CD8-positive, alpha-beta T cell (primary cell): ENCODE measurements at regions of chr3 and their contacts with region 1.

Region 1: GRCh38 chr3:112498914-112499711 is at the start of gene BTLA:
- DNase-seq: peak in 5 of 9 experiments; percentile 11 to 67 (median 24)
- ATAC-seq: peak; percentile 62
- H3K4me3 ChIP-seq: peak within 1 kb of the TSS; percentile 31 to 64
- H3K4me3 Mint-ChIP-seq: peak within 1 kb of the TSS; percentile 88
- H3K27ac ChIP-seq: peak within 1 kb of the TSS; percentile 48 to 65
- H3K27ac Mint-ChIP-seq: peak within 1 kb of the TSS; percentile 90
- H3K4me1 ChIP-seq: peaks cover 35% of the 10 kb centered on the region
- H3K4me1 Mint-ChIP-seq: peaks cover 59% of the 10 kb centered on the region
- H3K27me3 ChIP-seq: no peaks in the 10 kb centered on the region
- H3K27me3 Mint-ChIP-seq: no peaks in the 10 kb centered on the region
- CTCF ChIP-seq: no peak
- total RNA-seq, gene BTLA: 3.0 to 4.6 TPM

Region 2: GRCh38 chr3:112464264-112464663 is 34.8 kb before region 1 on chr3:
- CTCF ChIA-PET with region 1: interaction called, 5 read pairs
- POLR2A ChIA-PET with region 1: interaction called, 9 read pairs
- intact Hi-C with region 1: loop called in 1 of 2 experiments (anchors 5 kb)
- DNase-seq: peak in 2 of 9 experiments; percentile 38 to 61
- ATAC-seq: peak; percentile 71
- H3K4me3 ChIP-seq: peak overlapping the region in 1 of 2 experiments; percentile 28
- H3K4me3 Mint-ChIP-seq: peak overlapping the region; percentile 53
- H3K27ac ChIP-seq: peak overlapping the region; percentile 7 to 46
- H3K27ac Mint-ChIP-seq: peak overlapping the region; percentile 85
- H3K4me1 ChIP-seq: peaks cover 71% of the 10 kb centered on the region
- H3K4me1 Mint-ChIP-seq: peaks cover 87% of the 10 kb centered on the region
- H3K27me3 ChIP-seq: no peaks in the 10 kb centered on the region
- H3K27me3 Mint-ChIP-seq: no peaks in the 10 kb centered on the region
- CTCF ChIP-seq: no peak

Region 3: GRCh38 chr3:112482675-112483074 is 16.4 kb before region 1 on chr3:
- CTCF ChIA-PET with region 1: no interaction called
- POLR2A ChIA-PET with region 1: no interaction called
- intact Hi-C with region 1: loop called in 1 of 2 experiments (anchors 2 kb)
- DNase-seq: no peak
- ATAC-seq: no peak
- H3K4me3 ChIP-seq: no peak overlapping the region
- H3K4me3 Mint-ChIP-seq: peak overlapping the region; percentile 46
- H3K27ac ChIP-seq: no peak overlapping the region
- H3K27ac Mint-ChIP-seq: peak overlapping the region; percentile 82
- H3K4me1 ChIP-seq: peaks cover 18% of the 10 kb centered on the region
- H3K4me1 Mint-ChIP-seq: peaks cover 56% of the 10 kb centered on the region
- H3K27me3 ChIP-seq: no peaks in the 10 kb centered on the region
- H3K27me3 Mint-ChIP-seq: no peaks in the 10 kb centered on the region
- CTCF ChIP-seq: no peak